Cardiac septum (tissue), 1 donor: ENCODE measurements at regions of chr22 and their contacts with region 1.

Region 1: GRCh38 chr22:43098356-43098755 is 9.2 kb upstream of the TTLL1 start:
- DNase-seq: no peak

Region 2: DNA sequence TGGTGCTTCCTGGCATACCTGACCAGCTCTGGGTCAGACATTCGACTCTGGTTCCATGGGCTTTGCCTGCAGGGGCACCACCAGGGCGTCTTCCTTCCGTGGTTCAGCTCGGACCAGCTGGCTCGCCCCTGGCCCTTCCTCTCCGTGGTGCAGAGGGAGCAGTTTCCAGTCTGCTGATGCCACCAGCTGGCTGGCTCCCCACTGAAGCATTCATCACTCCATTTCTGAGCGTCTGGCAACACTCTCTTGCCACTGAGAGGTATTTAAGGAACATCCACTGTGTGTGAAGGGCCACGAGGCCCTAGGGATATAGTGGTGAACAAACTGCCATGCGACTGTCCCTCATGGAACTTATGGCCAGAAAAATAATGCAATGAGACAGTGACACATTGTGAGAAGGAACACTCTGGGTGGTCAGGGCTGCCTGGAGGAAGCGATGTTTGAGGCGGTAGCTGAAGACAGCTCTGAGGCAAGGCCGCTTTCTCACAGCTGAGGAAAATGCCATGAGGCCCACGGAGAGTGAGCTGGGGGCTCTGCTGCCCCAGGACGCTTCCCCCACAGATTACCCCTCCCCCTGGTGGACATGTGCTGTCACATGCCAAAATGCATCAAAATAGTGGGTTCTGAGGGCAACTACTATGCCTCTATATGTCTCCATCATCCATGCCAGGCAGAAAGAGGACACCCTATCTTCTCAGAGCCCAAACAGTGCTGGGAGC is 196.4 kb before region 1 on chr22:
- intact Hi-C with region 1: loop called (anchors 5 kb)
- DNase-seq: no peak